PC-9 (cell line): ENCODE measurements at regions of chr16 and their contacts with region 1.

Region 1: GRCh38 chr16:30557957-30558788 is at the start of gene ZNF764:
- DNase-seq: peak; percentile 97 to 99
- H3K4me3 ChIP-seq: peak within 1 kb of the TSS; percentile 88
- H3K27ac ChIP-seq: peak within 1 kb of the TSS; percentile 64
- H3K4me1 ChIP-seq: peaks cover 19% of the 10 kb centered on the region
- H3K27me3 ChIP-seq: no peaks in the 10 kb centered on the region
- CTCF ChIP-seq: no peak
- total RNA-seq, gene ZNF764: 12.3 and 12.4 TPM in 2 replicates

Region 2: GRCh38 chr16:30491744-30492308 is 66.3 kb before region 1 on chr16:
- CTCF ChIA-PET with region 1: no interaction called
- POLR2A ChIA-PET with region 1: interaction called, 10 read pairs
- intact Hi-C with region 1: no loop called
- DNase-seq: peak; percentile 86 to 90
- H3K4me3 ChIP-seq: no peak overlapping the region
- H3K27ac ChIP-seq: no peak overlapping the region
- H3K4me1 ChIP-seq: peaks cover 15% of the 10 kb centered on the region
- H3K27me3 ChIP-seq: no peaks in the 10 kb centered on the region
- CTCF ChIP-seq: no peak

Region 3: DNA sequence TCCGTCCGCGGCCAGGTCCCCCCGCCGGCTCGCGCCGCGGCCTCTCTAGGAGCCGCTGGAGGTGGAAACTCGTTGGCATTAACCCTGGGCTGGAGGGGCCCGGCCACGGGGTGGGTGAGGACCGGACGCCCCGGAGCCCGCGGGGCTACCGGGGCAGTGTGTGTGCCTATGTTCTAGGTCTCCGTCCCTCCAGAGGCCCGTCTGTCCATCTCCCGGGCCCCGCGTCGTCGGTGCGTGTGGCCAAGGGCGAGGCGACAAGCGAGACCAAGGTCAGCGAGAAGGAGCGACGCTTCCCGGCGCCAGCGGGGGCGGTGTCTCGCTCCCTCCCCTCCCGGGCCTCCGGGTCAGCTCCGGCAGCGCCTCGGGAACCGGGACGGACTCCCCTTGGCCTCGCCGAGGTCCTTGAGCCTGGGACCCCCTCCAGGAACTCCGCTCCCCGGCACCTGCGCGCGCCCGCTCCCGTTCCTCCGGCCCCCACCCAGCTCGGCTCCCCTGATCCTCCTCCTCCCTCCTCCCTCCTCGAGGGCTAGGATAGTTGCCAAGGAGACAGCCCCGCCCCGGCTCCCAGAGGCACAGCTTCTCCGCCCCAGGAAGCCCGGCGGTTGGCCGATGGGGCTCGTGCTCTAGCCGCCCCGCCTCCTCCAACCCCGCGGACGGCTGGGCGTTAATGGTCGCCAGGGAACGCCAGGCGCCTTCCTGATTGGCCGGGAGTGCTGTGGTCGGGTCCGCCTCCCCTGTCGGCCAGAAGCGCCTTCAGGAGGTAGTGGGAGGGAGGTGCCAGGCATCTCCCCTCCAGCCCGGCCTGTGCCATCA is 31.1 kb before region 1 on chr16:
- CTCF ChIA-PET with region 1: interaction called, 3 read pairs
- POLR2A ChIA-PET with region 1: interaction called, 4 read pairs
- intact Hi-C with region 1: loop called (anchors 2 kb)
- DNase-seq: peak; percentile 94 to 100
- H3K4me3 ChIP-seq: peak overlapping the region; percentile 97
- H3K27ac ChIP-seq: peak overlapping the region; percentile 79
- H3K4me1 ChIP-seq: peaks cover 32% of the 10 kb centered on the region
- H3K27me3 ChIP-seq: no peaks in the 10 kb centered on the region
- CTCF ChIP-seq: peak; percentile 50; the same call in 1 of the 2 replicates

Region 4: GRCh38 chr16:30571695-30572600 is 13.8 kb after region 1 on chr16 and contains the start of gene ZNF688:
- CTCF ChIA-PET with region 1: no interaction called
- POLR2A ChIA-PET with region 1: interaction called, 11 read pairs
- intact Hi-C with region 1: loop called (anchors 2 kb)
- DNase-seq: peak; percentile 93 to 94
- H3K4me3 ChIP-seq: peak within 1 kb of the TSS; percentile 89
- H3K27ac ChIP-seq: peak within 1 kb of the TSS; percentile 61
- H3K4me1 ChIP-seq: peaks cover 40% of the 10 kb centered on the region
- H3K27me3 ChIP-seq: no peaks in the 10 kb centered on the region
- CTCF ChIP-seq: no peak
- total RNA-seq, gene ZNF688: 13.1 and 25.7 TPM in 2 replicates

Region 5: GRCh38 chr16:30637942-30638341 is 79.8 kb after region 1 on chr16:
- CTCF ChIA-PET with region 1: interaction called, 12 read pairs
- POLR2A ChIA-PET with region 1: interaction called, 4 read pairs
- intact Hi-C with region 1: no loop called
- DNase-seq: peak; percentile 31 to 67
- H3K4me3 ChIP-seq: no peak overlapping the region
- H3K27ac ChIP-seq: no peak overlapping the region
- H3K4me1 ChIP-seq: peaks cover 13% of the 10 kb centered on the region; the same call in 1 of the 2 replicates
- H3K27me3 ChIP-seq: no peaks in the 10 kb centered on the region
- CTCF ChIP-seq: peak; percentile 73

Region 6: DNA sequence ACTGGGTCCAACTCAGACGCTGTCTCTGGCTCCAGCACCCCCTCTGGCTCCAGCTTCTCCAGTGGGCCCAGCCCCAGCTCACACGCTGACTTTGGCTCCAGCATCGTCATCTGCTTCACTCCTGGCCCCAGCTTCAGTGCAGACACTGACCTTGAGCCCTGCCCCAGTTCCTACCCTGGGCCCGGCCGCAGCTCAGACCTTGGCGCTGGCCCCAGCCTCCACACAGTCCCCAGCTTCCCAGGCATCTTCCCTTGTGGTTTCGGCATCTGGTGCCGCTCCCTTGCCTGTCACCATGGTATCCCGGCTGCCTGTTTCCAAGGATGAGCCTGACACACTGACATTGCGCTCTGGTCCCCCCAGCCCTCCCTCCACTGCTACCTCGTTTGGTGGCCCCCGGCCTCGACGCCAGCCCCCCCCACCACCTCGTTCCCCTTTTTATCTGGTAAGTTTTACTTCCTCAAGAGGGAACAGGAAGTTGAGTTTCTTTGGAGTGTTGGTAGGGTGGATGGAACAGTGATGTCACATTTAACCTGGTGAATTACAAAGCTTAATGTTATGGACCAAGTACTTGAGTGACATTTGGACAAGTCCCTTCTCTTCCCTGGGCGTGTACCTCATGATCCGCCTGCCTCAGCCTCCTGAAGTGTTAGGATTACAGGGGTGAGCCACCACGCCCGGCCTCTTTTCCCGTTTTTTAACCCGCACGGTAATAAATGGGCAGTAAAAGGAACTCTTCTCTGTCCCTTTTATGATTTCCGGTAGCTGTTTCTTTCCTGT is 166.7 kb after region 1 on chr16:
- CTCF ChIA-PET with region 1: no interaction called
- POLR2A ChIA-PET with region 1: no interaction called
- intact Hi-C with region 1: no loop called
- DNase-seq: no peak
- H3K4me3 ChIP-seq: no peak overlapping the region
- H3K27ac ChIP-seq: no peak overlapping the region
- H3K4me1 ChIP-seq: 0 out of 2 replicates have a peak, but pooled peaks cover 5% of the 10 kb centered on the region
- H3K27me3 ChIP-seq: no peaks in the 10 kb centered on the region
- CTCF ChIP-seq: no peak